Thyroid gland (tissue), 4 donors: ENCODE measurements at regions of chr5 and their contacts with region 1.

Region 1: GRCh38 chr5:4879693-4880303 is 260.3 kb upstream of the ADAMTS16 start:
- DNase-seq: peak; percentile 63 to 64
- H3K4me3 ChIP-seq: no peak overlapping the region
- H3K27ac ChIP-seq: no peak overlapping the region
- H3K4me1 ChIP-seq: no peaks in the 10 kb centered on the region
- H3K27me3 ChIP-seq: no peaks in the 10 kb centered on the region
- CTCF ChIP-seq: peak; percentile 60 to 90 (median 74)
- POLR2A ChIP-seq: no peak

Region 2: GRCh38 chr5:4758550-4758949 is 121.2 kb before region 1 on chr5:
- intact Hi-C with region 1: no loop called
- DNase-seq: peak in 1 of 2 donors; percentile 10
- H3K4me3 ChIP-seq: no peak overlapping the region
- H3K27ac ChIP-seq: no peak overlapping the region
- H3K4me1 ChIP-seq: no peaks in the 10 kb centered on the region
- H3K27me3 ChIP-seq: no peaks in the 10 kb centered on the region
- CTCF ChIP-seq: no peak
- POLR2A ChIP-seq: no peak

Region 3: DNA sequence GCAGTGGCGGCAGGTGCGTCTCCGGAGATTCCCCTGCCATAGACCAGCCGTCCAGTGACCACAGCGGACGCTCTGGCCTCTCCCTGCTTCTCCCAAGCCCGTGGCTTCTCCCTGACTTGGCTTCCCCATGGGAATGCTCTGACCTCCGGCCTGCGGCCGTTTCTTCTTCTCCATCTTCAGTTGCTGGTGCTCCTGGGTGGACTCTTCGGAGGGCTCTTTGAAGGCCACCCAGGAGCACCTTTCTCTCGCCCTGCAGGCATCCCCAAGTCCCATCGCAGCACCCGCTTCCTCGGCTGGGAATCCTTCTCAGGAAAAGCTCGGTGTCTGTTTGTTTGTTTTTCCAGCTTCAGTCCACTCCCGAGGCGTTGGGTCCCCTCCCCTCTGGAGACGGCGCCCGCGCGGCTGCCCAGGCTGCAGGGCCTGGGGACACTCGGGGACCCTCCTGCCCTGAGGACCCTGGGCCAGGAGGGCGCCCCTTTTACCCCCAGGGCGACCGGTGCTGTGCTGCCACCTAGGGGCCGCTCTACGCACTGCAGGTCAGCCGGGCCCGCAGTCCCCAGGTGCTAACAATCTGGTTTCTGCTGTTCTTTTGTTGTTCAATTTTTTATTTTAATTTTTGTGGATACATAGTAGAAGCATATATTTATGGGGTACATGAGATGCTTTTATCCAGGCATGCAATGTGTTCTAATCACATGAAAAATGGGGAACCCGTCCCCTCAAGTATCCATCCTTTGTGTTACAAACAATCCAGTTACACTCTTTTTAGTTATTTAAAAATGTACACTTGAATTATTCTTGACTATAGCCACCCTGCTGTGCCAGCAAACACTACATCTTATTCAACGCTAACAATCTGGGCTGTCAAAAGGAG is 62.4 kb after region 1 on chr5:
- intact Hi-C with region 1: loop called (anchors 5 kb)
- DNase-seq: no peak
- H3K4me3 ChIP-seq: no peak overlapping the region
- H3K27ac ChIP-seq: no peak overlapping the region
- H3K4me1 ChIP-seq: no peaks in the 10 kb centered on the region
- H3K27me3 ChIP-seq: no peaks in the 10 kb centered on the region
- CTCF ChIP-seq: peak; percentile 32 to 79 (median 64)
- POLR2A ChIP-seq: no peak